H1 (cell line): ENCODE measurements at regions of chr11 and their contacts with region 1.

Region 1: DNA sequence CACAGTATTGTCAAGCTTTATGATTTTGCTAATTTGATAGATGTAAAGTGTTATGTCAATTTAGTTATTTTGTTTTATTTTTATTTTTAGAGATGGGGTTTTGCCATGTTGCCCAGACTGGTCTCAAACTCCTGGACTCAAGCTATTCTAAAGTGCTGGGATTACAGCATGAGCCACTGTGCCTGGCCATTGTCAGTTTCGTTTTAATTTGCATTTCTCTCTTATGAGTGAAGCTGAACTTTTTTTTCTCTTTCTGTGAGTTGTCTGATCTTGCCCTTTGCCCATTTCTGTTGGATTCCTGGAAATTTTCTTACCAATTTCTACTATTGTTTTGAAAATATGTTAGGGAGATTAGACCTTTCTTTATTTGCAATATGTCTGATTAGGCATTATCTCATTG is 15.5 kb downstream of the NEU3 start:
- DNase-seq: no peak
- H3K4me3 ChIP-seq: no peak overlapping the region
- H3K27ac ChIP-seq: no peak overlapping the region
- H3K4me1 ChIP-seq: no peaks in the 10 kb centered on the region
- H3K27me3 ChIP-seq: no peaks in the 10 kb centered on the region
- CTCF ChIP-seq: no peak
- EP300 ChIP-seq: no peak
- POLR2A ChIP-seq: no peak
- RAD21 ChIP-seq: no peak

Region 2: GRCh38 chr11:74988541-74989260 is 15.5 kb before region 1 on chr11 and contains the start of gene NEU3:
- CTCF ChIA-PET with region 1: interaction called, 3 read pairs
- POLR2A ChIA-PET with region 1: interaction called, 10 read pairs
- DNase-seq: peak; percentile 63 to 83
- H3K4me3 ChIP-seq: peak within 1 kb of the TSS; percentile 71 to 99 (median 80)
- H3K27ac ChIP-seq: no peak within 1 kb of the TSS
- H3K4me1 ChIP-seq: no peaks in the 10 kb centered on the region; a peak in 2 of 7 replicates
- H3K27me3 ChIP-seq: no peaks in the 10 kb centered on the region
- CTCF ChIP-seq: no peak
- EP300 ChIP-seq: peak in 1 of 2 experiments; percentile 17; a peak in 1 of 3 replicates
- POLR2A ChIP-seq: peak; percentile 83 to 93
- RAD21 ChIP-seq: no peak
- total RNA-seq, gene NEU3: 15.6 and 17.8 TPM in 2 replicates